ENCODE measurements at regions of chr1 and their contacts with region 1.

Region 1: GRCh38 chr1:211578640-211579433 is at the start of gene SLC30A1:
- DNase-seq: peak; percentile 100
- ATAC-seq: peak; percentile 90
- H3K4me3 Mint-ChIP-seq: peak within 1 kb of the TSS; percentile 97
- H3K27ac Mint-ChIP-seq: peak within 1 kb of the TSS; percentile 92
- H3K4me1 Mint-ChIP-seq: peaks cover 59% of the 10 kb centered on the region
- H3K27me3 Mint-ChIP-seq: peaks cover under 1% of the 10 kb centered on the region
- total RNA-seq, gene SLC30A1: 14.5 to 15.6 TPM

Region 2: GRCh38 chr1:211527006-211527405 is 51.8 kb before region 1 on chr1:
- CTCF ChIA-PET with region 1: no interaction called
- POLR2A ChIA-PET with region 1: no interaction called
- DNase-seq: no peak
- ATAC-seq: no peak
- H3K4me3 Mint-ChIP-seq: no peak overlapping the region
- H3K27ac Mint-ChIP-seq: no peak overlapping the region
- H3K4me1 Mint-ChIP-seq: peaks cover 14% of the 10 kb centered on the region
- H3K27me3 Mint-ChIP-seq: peaks cover 4% of the 10 kb centered on the region

Region 3: GRCh38 chr1:211551628-211552460 is 27.0 kb before region 1 on chr1:
- CTCF ChIA-PET with region 1: no interaction called
- POLR2A ChIA-PET with region 1: no interaction called
- DNase-seq: no peak
- ATAC-seq: no peak
- H3K4me3 Mint-ChIP-seq: no peak overlapping the region
- H3K27ac Mint-ChIP-seq: no peak overlapping the region
- H3K4me1 Mint-ChIP-seq: no peaks in the 10 kb centered on the region
- H3K27me3 Mint-ChIP-seq: peaks cover 12% of the 10 kb centered on the region

Region 4: DNA sequence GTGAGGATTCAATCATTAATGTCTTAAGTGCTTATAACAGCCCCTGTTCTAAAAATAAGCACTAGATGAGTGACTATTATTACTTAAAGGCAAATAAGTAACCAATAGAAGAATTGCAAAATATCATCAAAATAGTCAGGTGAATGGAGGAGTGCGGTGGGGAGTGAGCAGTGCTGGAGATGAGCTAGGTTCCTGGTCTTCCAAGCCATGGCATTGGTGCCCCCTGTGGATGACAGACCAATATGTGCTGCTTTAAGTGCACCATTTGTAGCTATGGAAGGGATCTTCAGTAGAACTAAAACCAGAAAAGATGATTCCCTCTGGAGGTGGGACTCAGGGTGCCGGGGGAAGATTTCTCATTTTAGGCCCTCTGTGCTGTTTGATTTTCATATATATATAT is 46.2 kb after region 1 on chr1:
- CTCF ChIA-PET with region 1: interaction called, 10 read pairs
- POLR2A ChIA-PET with region 1: interaction called, 3 read pairs
- DNase-seq: peak; percentile 57
- ATAC-seq: peak; percentile 74
- H3K4me3 Mint-ChIP-seq: no peak overlapping the region
- H3K27ac Mint-ChIP-seq: peak overlapping the region; percentile 27
- H3K4me1 Mint-ChIP-seq: peaks cover 24% of the 10 kb centered on the region
- H3K27me3 Mint-ChIP-seq: peaks cover 8% of the 10 kb centered on the region